Activated B cell treated with CpG ODN at 0.5 μM for 24 hours (primary cell): ENCODE measurements at regions of chr5 and their contacts with region 1.

Region 1: GRCh38 chr5:173094012-173094661 is 38.0 kb downstream of the CREBRF start:
- DNase-seq: no peak
- ATAC-seq: no peak
- H3K4me3 Mint-ChIP-seq: no peak overlapping the region
- H3K27ac Mint-ChIP-seq: no peak overlapping the region
- H3K4me1 Mint-ChIP-seq: peaks cover 24% of the 10 kb centered on the region
- H3K27me3 Mint-ChIP-seq: no peaks in the 10 kb centered on the region
- CTCF ChIP-seq: no peak

Region 2: GRCh38 chr5:173138707-173139106 is 44.6 kb after region 1 on chr5:
- CTCF ChIA-PET with region 1: no interaction called
- POLR2A ChIA-PET with region 1: no interaction called
- intact Hi-C with region 1: loop called (anchors 5 kb)
- DNase-seq: no peak
- ATAC-seq: no peak
- H3K4me3 Mint-ChIP-seq: no peak overlapping the region
- H3K27ac Mint-ChIP-seq: no peak overlapping the region
- H3K4me1 Mint-ChIP-seq: no peaks in the 10 kb centered on the region
- H3K27me3 Mint-ChIP-seq: no peaks in the 10 kb centered on the region
- CTCF ChIP-seq: no peak